ENCODE measurements at regions of chr10 and their contacts with region 1.

Region 1: DNA sequence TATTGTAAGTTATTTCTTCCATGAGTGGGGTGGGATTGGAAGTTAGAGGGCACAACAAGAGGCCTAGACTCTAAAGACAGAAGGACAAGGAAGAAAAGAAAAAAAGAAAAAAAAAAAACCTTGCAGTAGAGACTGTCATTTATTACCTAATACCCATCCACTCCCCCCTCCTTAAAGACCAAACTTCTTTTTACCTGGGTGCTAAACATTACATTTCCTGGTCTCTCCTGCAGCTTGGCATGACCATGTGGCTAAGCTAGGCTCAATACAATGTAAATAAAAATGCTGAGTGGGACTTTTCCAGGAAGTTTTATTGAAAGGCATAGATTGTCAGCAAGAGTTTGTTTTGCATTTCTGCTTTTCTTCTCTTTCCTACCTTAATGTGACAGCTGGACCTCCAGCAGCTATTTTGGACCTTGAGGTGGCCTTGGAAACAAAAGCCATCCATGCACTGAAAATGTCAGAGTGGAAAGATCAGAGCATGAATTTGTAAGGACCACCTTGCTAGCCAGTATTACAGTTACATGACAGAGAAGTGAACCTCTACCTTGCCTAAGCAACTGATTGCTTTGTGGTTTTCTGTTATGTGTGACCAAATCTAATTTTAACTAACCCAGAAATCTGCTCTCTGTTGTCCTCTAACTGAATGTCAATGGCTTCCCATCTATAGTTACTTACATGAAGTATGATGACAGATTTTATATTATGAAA is 81.3 kb upstream of the SFMBT2 start:
- DNase-seq: no peak
- H3K4me3 ChIP-seq: no peak overlapping the region
- H3K27ac ChIP-seq: no peak overlapping the region
- H3K27me3 ChIP-seq: peaks cover 2% of the 10 kb centered on the region
- CTCF ChIP-seq: no peak

Region 2: DNA sequence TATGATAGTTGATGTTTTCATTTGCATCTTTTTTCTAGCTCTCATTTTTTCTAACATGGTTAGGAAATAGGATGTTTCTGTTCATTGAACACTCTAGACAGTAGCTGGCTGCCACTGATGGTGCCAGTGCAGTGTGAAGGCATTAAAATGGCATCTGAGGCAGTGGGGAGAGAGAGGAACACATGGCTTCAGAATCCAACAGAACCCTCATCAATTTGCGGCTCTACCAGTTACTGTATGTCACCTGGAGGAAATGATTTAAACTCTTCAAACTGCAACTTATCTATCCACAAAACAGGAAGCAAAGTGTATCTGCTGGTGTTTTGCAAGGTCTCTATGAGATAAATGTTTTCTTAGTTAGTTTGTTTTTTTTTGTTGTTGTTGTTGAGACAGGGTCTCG is 606.8 kb before region 1 on chr10:
- CTCF ChIA-PET with region 1: interaction called, 10 read pairs
- POLR2A ChIA-PET with region 1: no interaction called
- DNase-seq: no peak
- H3K4me3 ChIP-seq: no peak overlapping the region
- H3K27ac ChIP-seq: no peak overlapping the region
- H3K27me3 ChIP-seq: no peaks in the 10 kb centered on the region
- CTCF ChIP-seq: no peak

Region 3: DNA sequence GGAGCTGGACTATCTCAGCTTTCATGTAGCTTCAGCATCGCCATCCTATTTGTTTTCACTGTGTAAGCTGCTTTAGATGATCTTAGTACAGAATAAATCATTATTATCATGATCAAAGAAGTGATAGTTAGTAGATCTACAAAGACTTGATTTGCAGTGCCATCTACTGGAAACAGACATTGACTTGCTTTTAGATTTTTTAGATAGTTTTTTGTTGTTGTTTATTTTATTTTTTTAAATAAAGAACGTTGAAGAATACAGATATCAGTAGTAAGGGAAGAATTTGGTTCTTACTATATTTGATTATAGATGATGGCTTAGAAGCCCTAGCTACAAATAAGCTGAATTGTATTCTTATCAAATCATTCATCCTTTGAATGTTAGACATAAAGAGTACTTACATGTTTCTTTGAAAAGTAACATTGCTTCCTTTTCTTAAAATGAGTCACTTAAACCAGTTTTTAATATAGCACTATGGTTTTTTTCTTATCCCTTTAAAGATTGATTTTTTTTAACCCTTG is 74.9 kb before region 1 on chr10:
- CTCF ChIA-PET with region 1: no interaction called
- POLR2A ChIA-PET with region 1: no interaction called
- DNase-seq: peak; percentile 7
- H3K4me3 ChIP-seq: no peak overlapping the region
- H3K27ac ChIP-seq: no peak overlapping the region
- H3K27me3 ChIP-seq: peaks cover 17% of the 10 kb centered on the region
- CTCF ChIP-seq: peak; percentile 57

Region 4: DNA sequence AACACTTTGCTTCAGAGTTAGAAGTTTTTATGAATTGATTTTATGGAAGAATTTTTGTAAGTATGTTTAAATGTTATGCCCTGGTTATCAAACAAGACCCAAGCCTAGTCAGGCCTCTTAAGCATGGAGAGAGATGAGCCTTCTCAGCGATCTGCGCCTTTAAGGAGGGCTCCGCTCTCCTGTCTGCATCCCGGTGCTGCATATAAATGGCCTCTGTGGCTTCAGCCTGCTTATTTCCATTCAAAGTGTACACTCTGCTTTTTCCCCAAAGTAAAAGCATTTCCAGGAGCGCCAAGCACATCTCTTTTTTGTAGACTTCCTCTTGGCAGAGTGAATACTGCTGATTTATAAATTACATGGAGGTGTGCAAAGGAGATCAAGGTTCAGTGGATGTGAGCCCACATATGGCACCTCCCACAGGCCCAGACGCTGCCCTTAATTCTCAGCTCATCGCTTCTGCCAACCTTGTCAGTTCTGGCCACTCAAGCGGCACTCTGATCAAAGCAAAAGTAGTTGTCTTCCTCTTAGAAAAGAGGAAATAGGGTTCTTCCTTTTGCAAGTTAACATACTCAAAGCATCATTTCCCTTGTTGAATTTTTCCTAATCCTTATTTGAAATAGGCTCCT is 11.2 kb before region 1 on chr10:
- CTCF ChIA-PET with region 1: no interaction called
- POLR2A ChIA-PET with region 1: no interaction called
- DNase-seq: no peak
- H3K4me3 ChIP-seq: no peak overlapping the region
- H3K27ac ChIP-seq: no peak overlapping the region
- H3K27me3 ChIP-seq: no peaks in the 10 kb centered on the region
- CTCF ChIP-seq: no peak